OCI-LY7 (cell line): ENCODE measurements at regions of chrX and their contacts with region 1.

Region 1: DNA sequence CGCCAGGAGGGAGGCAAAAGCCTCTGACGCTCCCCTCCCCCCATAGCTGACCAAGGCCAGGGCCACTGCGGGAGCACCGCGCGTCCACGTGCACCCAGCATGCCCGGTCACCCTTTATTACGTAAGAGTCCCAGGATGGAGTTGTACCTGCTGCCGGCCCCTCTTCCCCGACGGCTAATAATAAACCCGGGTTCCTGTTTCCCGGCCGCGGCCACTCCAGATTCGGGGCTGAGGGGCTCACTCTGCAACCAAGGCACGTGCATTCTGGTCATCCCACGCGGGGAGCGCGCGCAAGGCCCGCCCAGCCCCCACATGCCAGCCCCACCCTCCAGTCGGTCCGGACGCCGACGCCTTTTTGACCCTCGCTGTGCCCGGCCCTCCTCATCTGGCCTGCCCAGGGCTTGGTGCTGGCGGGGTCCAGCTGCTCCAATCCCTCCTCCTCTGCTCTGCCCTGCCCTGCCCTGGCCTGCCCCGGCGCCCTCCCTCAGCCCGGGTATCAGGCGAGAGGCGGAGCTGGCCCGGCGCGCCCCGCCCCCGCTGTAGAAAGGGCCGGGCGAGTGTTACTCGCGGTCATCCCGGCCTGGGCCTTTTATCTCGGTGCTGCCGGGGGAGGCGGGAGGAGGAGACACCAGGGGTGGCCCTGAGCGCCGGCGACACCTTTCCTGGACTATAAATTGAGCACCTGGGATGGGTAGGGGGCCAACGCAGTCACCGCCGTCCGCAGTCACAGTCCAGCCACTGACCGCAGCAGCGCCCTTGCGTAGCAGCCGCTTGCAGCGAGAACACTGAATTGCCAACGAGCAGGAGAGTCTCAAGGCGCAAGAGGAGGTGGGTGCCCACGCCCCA is 2.5 kb downstream of the MID1IP1 start:
- DNase-seq: peak; percentile 77
- H3K4me3 ChIP-seq: peak overlapping the region; percentile 99
- H3K27ac ChIP-seq: peak overlapping the region; percentile 89
- H3K4me1 ChIP-seq: peaks cover 29% of the 10 kb centered on the region
- CTCF ChIP-seq: no peak

Region 2: DNA sequence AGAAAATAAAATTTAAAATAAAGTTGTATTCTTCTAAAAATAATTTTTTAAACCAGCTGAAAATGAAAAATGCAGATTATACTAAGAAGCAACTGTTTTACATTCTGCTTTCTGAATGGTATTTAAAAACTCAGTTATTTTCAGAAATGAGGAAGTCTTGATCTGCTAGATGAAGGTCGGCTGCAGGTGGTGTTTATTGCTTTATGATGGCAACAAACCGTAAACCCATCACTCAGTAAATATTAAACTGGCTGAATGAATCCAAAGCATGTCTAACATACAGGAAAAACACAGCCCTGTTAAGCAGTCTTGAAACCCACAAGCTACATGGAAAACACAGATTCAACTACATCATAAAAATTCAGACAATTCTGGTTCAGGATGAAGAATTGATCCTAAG is 985.8 kb before region 1 on chrX:
- CTCF ChIA-PET with region 1: no interaction called
- POLR2A ChIA-PET with region 1: interaction called, 3 read pairs
- intact Hi-C with region 1: loop called (anchors 10 kb)
- DNase-seq: peak; percentile 87
- H3K4me3 ChIP-seq: peak overlapping the region; percentile 65
- H3K27ac ChIP-seq: peak overlapping the region; percentile 100
- H3K4me1 ChIP-seq: peaks cover 96% of the 10 kb centered on the region
- CTCF ChIP-seq: no peak

Region 3: DNA sequence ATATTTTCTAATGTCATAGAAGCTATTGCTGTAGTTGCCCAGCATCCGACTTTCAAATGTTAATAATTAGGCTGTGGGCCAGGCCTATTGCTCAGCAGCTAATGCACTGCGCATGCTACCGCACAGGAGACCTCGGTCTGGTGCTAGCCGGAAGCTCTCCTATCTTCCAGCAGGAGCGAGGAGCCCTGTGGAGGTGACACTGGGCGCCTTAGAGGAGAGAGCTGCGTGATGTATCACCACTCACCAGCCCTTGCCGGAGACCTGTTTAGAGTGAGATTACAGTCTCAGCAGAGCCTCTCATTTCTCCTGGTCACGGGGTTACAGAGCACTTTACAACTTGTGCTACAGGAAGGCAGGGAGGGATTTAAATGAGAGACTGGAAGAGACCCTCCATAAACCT is 33.7 kb before region 1 on chrX:
- CTCF ChIA-PET with region 1: no interaction called
- POLR2A ChIA-PET with region 1: no interaction called
- intact Hi-C with region 1: no loop called
- DNase-seq: no peak
- H3K4me3 ChIP-seq: no peak overlapping the region
- H3K27ac ChIP-seq: no peak overlapping the region
- H3K4me1 ChIP-seq: no peaks in the 10 kb centered on the region
- CTCF ChIP-seq: no peak

Region 4: GRCh38 chrX:38879631-38880220 is 75.9 kb after region 1 on chrX:
- CTCF ChIA-PET with region 1: interaction called, 5 read pairs
- POLR2A ChIA-PET with region 1: interaction called, 91 read pairs
- intact Hi-C with region 1: loop called (anchors 1 kb)
- DNase-seq: peak; percentile 95
- H3K4me3 ChIP-seq: peak overlapping the region; percentile 64
- H3K27ac ChIP-seq: peak overlapping the region; percentile 100
- H3K4me1 ChIP-seq: peaks cover 58% of the 10 kb centered on the region
- CTCF ChIP-seq: no peak

Region 5: GRCh38 chrX:39149761-39150160 is 346.0 kb after region 1 on chrX:
- CTCF ChIA-PET with region 1: no interaction called
- POLR2A ChIA-PET with region 1: interaction called, 5 read pairs
- intact Hi-C with region 1: loop called (anchors 1 kb)
- DNase-seq: peak; percentile 65
- H3K4me3 ChIP-seq: no peak overlapping the region
- H3K27ac ChIP-seq: no peak overlapping the region
- H3K4me1 ChIP-seq: peaks cover 9% of the 10 kb centered on the region
- CTCF ChIP-seq: peak; percentile 80

Region 6: GRCh38 chrX:40647307-40648197 is 1843.7 kb after region 1 on chrX and contains the start of gene CXorf38:
- CTCF ChIA-PET with region 1: no interaction called
- POLR2A ChIA-PET with region 1: no interaction called
- intact Hi-C with region 1: loop called (anchors 10 kb)
- DNase-seq: peak; percentile 90
- H3K4me3 ChIP-seq: peak within 1 kb of the TSS; percentile 76
- H3K27ac ChIP-seq: peak within 1 kb of the TSS; percentile 58
- H3K4me1 ChIP-seq: peaks cover 26% of the 10 kb centered on the region
- CTCF ChIP-seq: 0 out of 2 replicates have a peak, but pooled peaks have one; percentile 16
- total RNA-seq, gene CXorf38: 12.9 and 13.6 TPM in 2 replicates